CD4-positive, alpha-beta T cell (primary cell): ENCODE measurements at regions of chr21 and their contacts with region 1.

Region 1: DNA sequence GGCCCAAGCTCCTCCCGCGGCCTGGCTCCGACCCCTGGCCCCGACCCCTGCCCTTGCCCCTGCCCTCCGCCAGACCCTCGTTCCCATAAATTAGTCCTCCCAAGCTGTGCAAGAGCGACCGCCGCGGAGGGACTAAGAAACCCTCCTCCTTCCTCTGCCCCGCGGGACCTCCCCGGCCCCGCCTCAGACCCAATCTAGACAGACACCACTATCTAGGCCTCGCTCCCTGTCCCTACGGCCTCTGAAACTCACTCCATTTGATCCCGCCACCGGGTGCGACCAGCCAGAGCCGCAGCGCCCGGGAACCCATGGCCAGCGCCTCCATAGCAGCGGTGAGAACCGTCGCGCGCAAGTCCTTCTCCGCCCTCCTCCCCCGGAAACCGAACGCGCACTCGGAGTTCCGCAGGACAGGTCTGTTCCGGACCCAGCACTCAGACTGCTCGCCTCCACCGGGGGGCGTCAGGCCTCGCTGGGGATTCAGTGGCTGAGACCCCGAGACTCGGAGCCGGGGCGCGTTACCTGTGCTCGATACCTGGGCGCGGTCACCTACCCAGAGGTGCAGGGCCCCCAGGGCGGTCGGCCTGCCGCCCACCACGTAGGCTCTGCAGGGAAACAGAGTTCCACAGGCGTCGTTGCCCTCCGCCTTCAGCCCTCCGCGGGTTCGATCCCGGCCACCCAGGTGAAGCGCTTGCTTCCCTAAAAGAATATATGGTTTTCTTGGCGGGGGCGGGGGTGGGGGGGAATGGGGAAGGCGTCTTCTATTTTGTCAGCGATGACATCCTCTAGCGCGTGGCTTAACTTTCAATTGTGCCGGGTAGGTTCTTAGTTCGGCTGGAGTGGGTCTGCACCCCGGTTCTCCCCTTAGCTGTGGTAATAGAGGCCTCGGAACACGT is at the start of gene MRPL39:
- DNase-seq: peak; percentile 75 to 92 (median 82)
- ATAC-seq: peak; percentile 85
- H3K4me3 ChIP-seq: peak within 1 kb of the TSS; percentile 87
- H3K4me3 Mint-ChIP-seq: peak within 1 kb of the TSS; percentile 100
- H3K27ac ChIP-seq: peak within 1 kb of the TSS; percentile 64 to 67
- H3K27ac Mint-ChIP-seq: peak within 1 kb of the TSS; percentile 92
- H3K4me1 ChIP-seq: peaks cover 24% of the 10 kb centered on the region
- H3K4me1 Mint-ChIP-seq: peaks cover 51% of the 10 kb centered on the region
- H3K27me3 ChIP-seq: no peaks in the 10 kb centered on the region
- H3K27me3 Mint-ChIP-seq: no peaks in the 10 kb centered on the region
- CTCF ChIP-seq: peak; percentile 49
- total RNA-seq, gene MRPL39: 10.7 to 15.2 TPM

Region 2: GRCh38 chr21:25561668-25562641 is 45.4 kb before region 1 on chr21:
- CTCF ChIA-PET with region 1: interaction called, 5 read pairs
- POLR2A ChIA-PET with region 1: interaction called, 3 read pairs
- intact Hi-C with region 1: loop called (anchors 2 to 5 kb)
- DNase-seq: peak; percentile 28 to 91 (median 47)
- ATAC-seq: peak; percentile 69
- H3K4me3 ChIP-seq: peak overlapping the region; percentile 71
- H3K4me3 Mint-ChIP-seq: peak overlapping the region; percentile 97
- H3K27ac ChIP-seq: peak overlapping the region; percentile 60 to 65
- H3K27ac Mint-ChIP-seq: peak overlapping the region; percentile 84
- H3K4me1 ChIP-seq: peaks cover 43% of the 10 kb centered on the region
- H3K4me1 Mint-ChIP-seq: peaks cover 69% of the 10 kb centered on the region
- H3K27me3 ChIP-seq: no peaks in the 10 kb centered on the region
- H3K27me3 Mint-ChIP-seq: no peaks in the 10 kb centered on the region
- CTCF ChIP-seq: no peak

Region 3: GRCh38 chr21:25639551-25640201 is 32.3 kb after region 1 on chr21:
- CTCF ChIA-PET with region 1: interaction called, 3 read pairs
- POLR2A ChIA-PET with region 1: interaction called, 7 read pairs
- intact Hi-C with region 1: loop called in 1 of 2 experiments (anchors 2 kb)
- DNase-seq: peak; percentile 20 to 73 (median 36)
- ATAC-seq: peak; percentile 90
- H3K4me3 ChIP-seq: peak overlapping the region; percentile 66
- H3K4me3 Mint-ChIP-seq: peak overlapping the region; percentile 74
- H3K27ac ChIP-seq: no peak overlapping the region
- H3K27ac Mint-ChIP-seq: no peak overlapping the region
- H3K4me1 ChIP-seq: peaks cover 18% of the 10 kb centered on the region
- H3K4me1 Mint-ChIP-seq: peaks cover 18% of the 10 kb centered on the region
- H3K27me3 ChIP-seq: peaks cover 13 to 17% of the 10 kb centered on the region in 2 experiments
- H3K27me3 Mint-ChIP-seq: peaks cover 47% of the 10 kb centered on the region
- CTCF ChIP-seq: no peak

Region 4: GRCh38 chr21:25734904-25735645 is 127.7 kb after region 1 on chr21 and contains the starts of genes ATP5PF and GABPA:
- CTCF ChIA-PET with region 1: interaction called, 8 read pairs
- POLR2A ChIA-PET with region 1: interaction called, 32 read pairs
- intact Hi-C with region 1: loop called (anchors 1 to 2 kb)
- DNase-seq: peak; percentile 95 to 99 (median 97)
- ATAC-seq: peak; percentile 87
- H3K4me3 ChIP-seq: peak within 1 kb of the TSS; percentile 73
- H3K4me3 Mint-ChIP-seq: peak within 1 kb of the TSS; percentile 100
- H3K27ac ChIP-seq: peak within 1 kb of the TSS; percentile 90 to 93
- H3K27ac Mint-ChIP-seq: peak within 1 kb of the TSS; percentile 97
- H3K4me1 ChIP-seq: peaks cover 38% of the 10 kb centered on the region
- H3K4me1 Mint-ChIP-seq: peaks cover 70% of the 10 kb centered on the region
- H3K27me3 ChIP-seq: no peaks in the 10 kb centered on the region
- H3K27me3 Mint-ChIP-seq: no peaks in the 10 kb centered on the region
- CTCF ChIP-seq: no peak
- total RNA-seq, gene ATP5PF: 26.7 to 30.3 TPM
- total RNA-seq, gene GABPA: 23.5 to 23.6 TPM

Region 5: DNA sequence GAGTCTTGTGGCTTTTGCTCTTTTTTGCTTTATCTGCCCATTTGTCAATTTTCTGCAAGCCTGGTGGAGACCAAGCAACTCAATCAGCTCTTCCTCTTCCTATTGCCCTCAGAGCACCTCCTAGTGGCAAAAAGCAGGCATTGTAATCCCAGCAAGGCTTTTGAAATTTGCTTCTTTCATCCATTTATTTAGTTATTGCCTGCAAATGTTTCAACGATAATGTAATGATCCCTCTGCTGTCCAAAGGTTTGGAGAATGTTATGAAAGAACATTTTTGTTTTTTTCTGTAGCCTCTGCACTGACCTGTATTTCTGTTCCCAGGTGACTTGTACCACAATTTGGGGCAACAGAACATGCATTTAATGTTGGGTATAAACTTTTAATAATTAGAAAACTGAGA is 255.2 kb after region 1 on chr21:
- CTCF ChIA-PET with region 1: no interaction called
- POLR2A ChIA-PET with region 1: no interaction called
- intact Hi-C with region 1: loop called (anchors 1 to 5 kb)
- DNase-seq: peak in 4 of 14 experiments; percentile 28 to 56 (median 36)
- ATAC-seq: no peak
- H3K4me3 ChIP-seq: no peak overlapping the region
- H3K4me3 Mint-ChIP-seq: no peak overlapping the region
- H3K27ac ChIP-seq: no peak overlapping the region
- H3K27ac Mint-ChIP-seq: no peak overlapping the region
- H3K4me1 ChIP-seq: no peaks in the 10 kb centered on the region
- H3K4me1 Mint-ChIP-seq: no peaks in the 10 kb centered on the region
- H3K27me3 ChIP-seq: peaks cover 0 to 2% of the 10 kb centered on the region in 2 experiments
- H3K27me3 Mint-ChIP-seq: no peaks in the 10 kb centered on the region
- CTCF ChIP-seq: peak; percentile 71

Region 6: DNA sequence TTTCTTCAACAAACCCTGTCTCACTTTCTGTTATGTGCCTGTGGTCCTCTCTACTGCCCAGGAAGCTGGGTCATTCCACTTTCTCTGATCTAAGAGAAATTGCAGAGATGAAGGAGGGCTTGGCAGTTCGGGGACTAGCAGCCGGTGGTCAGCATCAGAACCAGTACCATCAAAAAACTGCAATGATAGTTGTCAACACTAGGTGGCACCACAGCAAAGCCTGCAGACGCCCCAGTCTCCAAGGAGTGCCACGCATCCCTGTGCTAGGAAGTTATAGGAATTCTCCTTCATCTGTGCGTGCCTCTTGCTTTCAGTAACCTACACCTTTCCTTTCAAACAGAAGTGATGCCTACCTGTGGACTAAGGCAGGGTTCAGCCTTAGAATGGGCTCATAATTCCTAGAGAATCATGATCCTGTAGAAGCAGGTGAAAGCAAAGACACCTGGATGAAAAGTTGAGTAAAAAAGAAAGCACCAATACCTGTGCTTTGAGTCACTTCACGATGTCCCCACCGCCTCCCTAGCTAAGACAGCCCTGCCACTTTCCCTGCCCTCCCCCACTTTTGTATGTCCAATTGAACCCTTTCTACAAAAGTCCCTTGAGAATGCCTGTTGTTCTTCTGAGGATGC is 1108.6 kb after region 1 on chr21:
- CTCF ChIA-PET with region 1: interaction called, 3 read pairs
- POLR2A ChIA-PET with region 1: no interaction called
- intact Hi-C with region 1: loop called in 1 of 2 experiments (anchors 2 kb)
- DNase-seq: peak in 4 of 14 experiments; percentile 14 to 50 (median 33)
- ATAC-seq: no peak
- H3K4me3 ChIP-seq: no peak overlapping the region
- H3K4me3 Mint-ChIP-seq: no peak overlapping the region
- H3K27ac ChIP-seq: no peak overlapping the region
- H3K27ac Mint-ChIP-seq: no peak overlapping the region
- H3K4me1 ChIP-seq: no peaks in the 10 kb centered on the region
- H3K4me1 Mint-ChIP-seq: no peaks in the 10 kb centered on the region
- H3K27me3 ChIP-seq: peaks cover 0 to 4% of the 10 kb centered on the region in 2 experiments
- H3K27me3 Mint-ChIP-seq: peaks cover 4% of the 10 kb centered on the region
- CTCF ChIP-seq: no peak